ENCODE measurements at regions of chr17 and their contacts with region 1.

Region 1: GRCh38 chr17:78176548-78177025 is 8.2 kb downstream of the SYNGR2 start:
- DNase-seq: peak; percentile 60 to 84 (median 64)
- H3K4me3 ChIP-seq: no peak overlapping the region
- H3K4me3 Mint-ChIP-seq: peak overlapping the region in 1 of 7 donors; percentile 9
- H3K27ac ChIP-seq: no peak overlapping the region
- H3K27ac Mint-ChIP-seq: no peak overlapping the region
- H3K4me1 ChIP-seq: peaks cover 37% of the 10 kb centered on the region
- H3K4me1 Mint-ChIP-seq: peaks cover 29 to 56% (median 42%) of the 10 kb centered on the region in 3 donors
- H3K27me3 ChIP-seq: no peaks in the 10 kb centered on the region
- H3K27me3 Mint-ChIP-seq: no peaks in the 10 kb centered on the region

Region 2: DNA sequence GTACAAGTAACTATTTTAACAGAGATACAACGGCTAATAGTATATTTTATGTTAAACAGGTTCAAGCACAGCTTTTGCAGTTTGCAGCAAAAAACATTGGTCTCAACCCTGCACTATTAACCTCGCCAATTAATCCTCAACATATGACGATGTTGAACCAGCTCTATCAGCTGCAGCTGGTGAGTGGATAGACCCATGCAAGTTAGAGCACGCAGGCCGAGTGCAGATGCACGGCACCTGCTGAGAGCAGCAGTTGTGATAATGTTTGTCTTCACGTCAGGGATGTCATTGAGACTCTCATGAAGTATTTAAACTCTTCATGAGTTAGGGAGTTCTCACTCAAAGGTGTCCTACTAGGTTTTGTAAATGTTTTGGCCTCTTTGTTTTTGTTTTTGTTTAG is 93.6 kb before region 1 on chr17:
- CTCF ChIA-PET with region 1: interaction called, 11 read pairs
- POLR2A ChIA-PET with region 1: interaction called, 4 read pairs
- DNase-seq: no peak
- H3K4me3 ChIP-seq: no peak overlapping the region
- H3K4me3 Mint-ChIP-seq: no peak overlapping the region
- H3K27ac ChIP-seq: no peak overlapping the region
- H3K27ac Mint-ChIP-seq: no peak overlapping the region
- H3K4me1 ChIP-seq: no peaks in the 10 kb centered on the region
- H3K4me1 Mint-ChIP-seq: peaks cover 0 to 3% (median 2%) of the 10 kb centered on the region in 3 donors
- H3K27me3 ChIP-seq: no peaks in the 10 kb centered on the region
- H3K27me3 Mint-ChIP-seq: no peaks in the 10 kb centered on the region

Region 3: GRCh38 chr17:78120971-78121800 is 55.4 kb before region 1 on chr17:
- CTCF ChIA-PET with region 1: interaction called, 31 read pairs
- POLR2A ChIA-PET with region 1: interaction called, 7 read pairs
- DNase-seq: peak in 4 of 5 donors; percentile 50 to 81 (median 79)
- H3K4me3 ChIP-seq: peak overlapping the region; percentile 81
- H3K4me3 Mint-ChIP-seq: peak overlapping the region; percentile 78 to 92 (median 85)
- H3K27ac ChIP-seq: peak overlapping the region; percentile 0
- H3K27ac Mint-ChIP-seq: peak overlapping the region; percentile 84 to 98 (median 88)
- H3K4me1 ChIP-seq: peaks cover 81% of the 10 kb centered on the region
- H3K4me1 Mint-ChIP-seq: peaks cover 39 to 84% (median 43%) of the 10 kb centered on the region in 3 donors
- H3K27me3 ChIP-seq: no peaks in the 10 kb centered on the region
- H3K27me3 Mint-ChIP-seq: peaks cover 0 to 2% of the 10 kb centered on the region in 2 donors

Region 4: DNA sequence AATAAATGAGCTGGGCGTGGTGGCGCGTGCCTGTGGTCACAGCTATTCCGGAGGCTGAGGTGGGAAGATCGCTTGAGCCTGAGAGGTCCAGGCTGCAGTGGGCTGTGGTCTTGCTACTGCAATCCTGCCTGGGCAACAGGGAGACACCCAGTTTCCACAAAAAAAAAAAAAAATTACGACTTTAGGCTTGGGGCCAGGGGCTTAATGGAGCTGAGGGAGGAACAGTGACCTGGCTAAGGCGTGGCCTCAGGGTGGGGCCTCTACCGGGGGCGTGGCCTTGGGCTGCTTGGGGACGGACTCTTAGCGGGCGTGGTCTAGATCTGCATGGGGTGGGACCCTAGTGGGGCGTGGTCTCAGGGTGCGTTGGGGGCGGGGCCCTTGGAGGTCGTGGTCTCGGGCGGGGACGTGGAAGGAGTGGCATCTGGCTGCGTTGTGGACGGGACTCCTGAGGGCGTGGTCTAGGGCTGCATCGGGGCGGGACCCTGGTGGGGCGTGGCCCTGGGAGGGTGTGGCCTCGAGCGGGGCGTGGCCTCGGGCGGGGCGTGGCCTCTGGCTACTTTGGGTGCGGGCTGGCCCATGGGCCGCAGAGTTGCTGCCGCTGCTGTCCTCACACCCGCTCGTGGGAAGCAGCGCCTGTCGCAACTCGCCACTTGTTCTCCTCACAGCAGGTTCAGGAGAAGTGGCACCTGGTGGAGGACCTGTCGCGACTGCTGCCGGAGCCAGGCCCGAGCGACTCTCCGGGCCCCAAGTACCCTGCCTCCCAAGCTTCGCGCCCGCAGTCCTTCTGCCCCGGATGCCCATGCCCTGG is 36.2 kb before region 1 on chr17:
- CTCF ChIA-PET with region 1: interaction called, 21 read pairs
- POLR2A ChIA-PET with region 1: interaction called, 6 read pairs
- DNase-seq: peak; percentile 92 to 95 (median 94)
- H3K4me3 ChIP-seq: peak overlapping the region; percentile 12
- H3K4me3 Mint-ChIP-seq: peak overlapping the region; percentile 32 to 82 (median 64)
- H3K27ac ChIP-seq: peak overlapping the region; percentile 54
- H3K27ac Mint-ChIP-seq: peak overlapping the region; percentile 87 to 95 (median 92)
- H3K4me1 ChIP-seq: peaks cover 76% of the 10 kb centered on the region
- H3K4me1 Mint-ChIP-seq: peaks cover 47 to 85% (median 59%) of the 10 kb centered on the region in 3 donors
- H3K27me3 ChIP-seq: no peaks in the 10 kb centered on the region
- H3K27me3 Mint-ChIP-seq: no peaks in the 10 kb centered on the region

Region 5: GRCh38 chr17:78250891-78251794 is 74.6 kb after region 1 on chr17:
- CTCF ChIA-PET with region 1: interaction called, 13 read pairs
- POLR2A ChIA-PET with region 1: no interaction called
- DNase-seq: peak; percentile 74 to 85 (median 77)
- H3K4me3 ChIP-seq: peak overlapping the region; percentile 77
- H3K4me3 Mint-ChIP-seq: peak overlapping the region; percentile 72 to 84 (median 80)
- H3K27ac ChIP-seq: peak overlapping the region; percentile 20
- H3K27ac Mint-ChIP-seq: peak overlapping the region; percentile 16 to 97 (median 94)
- H3K4me1 ChIP-seq: peaks cover 57% of the 10 kb centered on the region
- H3K4me1 Mint-ChIP-seq: peaks cover 33 to 53% (median 39%) of the 10 kb centered on the region in 3 donors
- H3K27me3 ChIP-seq: no peaks in the 10 kb centered on the region
- H3K27me3 Mint-ChIP-seq: peaks cover 0 to 2% of the 10 kb centered on the region in 2 donors

Region 6: DNA sequence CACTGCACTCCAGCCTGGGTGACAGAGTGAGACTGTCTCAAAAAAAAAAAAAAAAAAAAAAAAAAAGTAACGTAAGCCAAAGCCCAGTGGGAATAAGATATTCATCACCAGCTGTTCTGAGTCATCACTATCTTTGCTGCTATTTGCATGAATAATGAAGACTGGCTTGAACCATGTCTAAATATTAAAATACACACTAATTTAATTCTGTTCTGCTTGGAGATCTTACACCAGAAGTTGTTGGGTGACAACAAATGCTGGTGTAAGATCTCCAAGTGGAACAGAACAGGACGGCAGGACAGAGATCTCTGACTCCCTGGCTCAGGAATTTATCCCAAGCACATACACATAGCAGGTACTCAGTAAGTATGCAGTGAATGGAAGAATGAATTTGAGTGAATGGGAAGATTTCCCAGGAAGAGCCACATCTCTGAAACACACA is 381.0 kb after region 1 on chr17:
- CTCF ChIA-PET with region 1: no interaction called
- POLR2A ChIA-PET with region 1: no interaction called
- DNase-seq: no peak
- H3K4me3 ChIP-seq: no peak overlapping the region
- H3K4me3 Mint-ChIP-seq: no peak overlapping the region
- H3K27ac ChIP-seq: no peak overlapping the region
- H3K27ac Mint-ChIP-seq: no peak overlapping the region
- H3K4me1 ChIP-seq: no peaks in the 10 kb centered on the region
- H3K4me1 Mint-ChIP-seq: no peaks in the 10 kb centered on the region
- H3K27me3 ChIP-seq: no peaks in the 10 kb centered on the region
- H3K27me3 Mint-ChIP-seq: peaks cover 6 to 29% of the 10 kb centered on the region in 2 donors